GM18951 (cell line): ENCODE measurements at regions of chrX and their contacts with region 1.

Region 1: DNA sequence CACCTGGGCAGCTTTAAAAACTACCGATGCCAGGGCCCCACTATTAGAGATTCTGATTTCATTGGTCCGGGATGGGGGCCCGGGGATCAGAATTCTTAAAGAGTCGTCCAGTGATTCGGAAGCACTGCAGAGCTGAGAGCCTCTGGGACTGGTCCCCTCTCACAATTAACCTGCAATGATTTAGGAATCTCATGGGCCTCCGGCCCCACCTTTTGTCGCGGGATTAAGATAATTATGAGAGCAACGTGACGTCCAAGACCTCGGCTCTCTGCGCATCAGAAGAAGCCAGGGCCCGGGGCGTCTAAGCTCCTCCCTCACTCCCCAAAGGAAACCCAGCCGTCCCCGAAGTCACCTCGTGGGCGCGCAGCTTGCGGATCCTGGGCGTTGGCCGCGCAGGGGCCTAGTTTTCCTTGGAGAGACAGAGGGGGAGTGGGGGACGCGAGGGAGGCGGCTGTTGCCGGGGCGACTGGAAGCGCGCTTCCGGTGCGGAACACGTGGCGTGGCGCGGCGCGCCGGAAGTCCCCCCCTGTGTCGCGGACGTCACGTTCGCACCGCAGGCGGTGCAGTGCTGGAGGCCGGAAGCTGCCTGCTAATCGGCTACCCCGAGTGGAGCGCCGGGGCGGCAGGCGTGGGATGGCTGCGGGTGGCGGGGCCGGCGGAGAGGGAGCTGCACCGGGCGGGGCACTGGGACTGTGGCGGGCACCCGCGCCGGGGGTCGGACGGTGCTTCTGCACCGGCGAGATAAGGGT is at the start of gene GEMIN8:
- POLR2A ChIP-seq: peak; percentile 93

Region 2: DNA sequence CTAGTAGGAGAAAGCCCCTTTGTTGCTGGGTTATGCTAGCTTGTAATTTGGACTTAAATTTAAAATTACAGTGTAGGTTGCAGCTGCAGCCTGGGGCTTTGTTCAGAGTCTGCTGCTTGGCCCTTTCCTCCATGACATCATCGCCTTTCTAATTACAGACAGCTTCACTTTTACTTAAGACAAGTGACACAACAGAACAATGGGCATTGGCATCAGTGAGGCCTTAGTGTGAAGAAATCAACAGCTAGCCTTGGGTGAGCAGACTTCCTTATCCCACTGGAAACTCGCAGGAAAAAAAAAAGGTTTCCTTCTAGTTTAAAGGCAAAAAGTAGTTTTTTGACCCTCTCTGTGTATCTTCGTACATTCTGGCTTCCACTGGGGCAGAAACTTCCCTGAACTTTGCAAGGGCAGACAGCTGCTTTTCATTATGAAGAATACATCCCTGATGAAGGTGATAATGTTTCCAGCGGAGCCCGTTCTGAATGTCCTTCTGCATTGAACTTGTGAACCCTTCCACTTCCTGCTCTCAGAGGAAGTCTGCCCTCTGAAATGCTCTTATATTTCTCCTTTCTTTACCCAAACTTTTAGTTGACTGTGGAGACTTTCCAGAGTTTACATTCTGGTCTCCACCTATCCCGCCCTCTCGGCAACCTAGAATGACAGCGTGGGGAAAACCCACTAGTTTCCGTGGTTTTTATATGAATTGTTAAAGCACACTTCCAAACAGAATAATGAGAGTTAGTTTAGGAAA is 861.9 kb before region 1 on chrX:
- in situ Hi-C with region 1: loop called (anchors 25 kb)
- POLR2A ChIP-seq: no peak

Region 3: GRCh38 chrX:13515211-13515930 is 514.2 kb before region 1 on chrX:
- in situ Hi-C with region 1: loop called (anchors 10 kb)
- POLR2A ChIP-seq: no peak

Region 4: GRCh38 chrX:13653022-13653693 is 376.4 kb before region 1 on chrX and contains the start of gene TCEANC:
- in situ Hi-C with region 1: loop called (anchors 10 kb)
- POLR2A ChIP-seq: peak; percentile 81

Region 5: GRCh38 chrX:13764765-13765164 is 264.8 kb before region 1 on chrX:
- in situ Hi-C with region 1: loop called (anchors 10 kb)
- POLR2A ChIP-seq: no peak

Region 6: GRCh38 chrX:13898083-13898482 is 131.5 kb before region 1 on chrX:
- in situ Hi-C with region 1: loop called (anchors 10 kb)
- POLR2A ChIP-seq: no peak

Region 7: GRCh38 chrX:14420841-14421240 is 391.2 kb after region 1 on chrX:
- in situ Hi-C with region 1: no loop called
- POLR2A ChIP-seq: no peak

Region 8: DNA sequence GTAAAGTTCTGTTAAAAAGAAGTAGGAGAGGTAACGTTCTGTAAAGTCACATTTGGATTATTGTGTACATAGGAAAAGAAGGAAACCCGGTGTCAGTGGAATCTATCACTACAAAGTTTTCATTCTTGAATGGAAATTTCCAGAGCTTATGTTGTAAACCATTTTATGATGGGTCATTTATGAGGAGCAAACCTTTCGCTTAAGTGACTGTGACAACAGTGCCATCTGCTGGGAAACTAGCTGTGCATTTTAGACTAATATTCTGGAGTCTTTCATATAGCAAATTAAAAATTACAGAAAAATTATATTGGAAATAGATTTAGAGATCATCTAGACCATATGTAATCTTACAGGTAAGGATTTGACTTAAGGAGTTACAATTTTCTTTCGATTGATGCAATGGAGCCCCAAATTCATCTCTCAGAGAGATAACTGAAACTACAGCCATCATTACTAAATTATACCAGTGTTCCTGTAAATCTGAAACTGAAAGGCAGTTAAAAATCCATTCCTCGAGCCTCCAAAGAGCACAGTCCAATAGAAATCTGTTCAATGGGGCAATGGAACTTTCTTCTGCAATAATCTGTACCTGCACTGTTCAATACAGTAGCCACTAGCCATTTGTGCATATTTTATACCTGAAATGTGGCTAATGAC is 1213.4 kb after region 1 on chrX:
- in situ Hi-C with region 1: loop called (anchors 25 kb)
- POLR2A ChIP-seq: no peak